Gastrocnemius medialis (tissue), 4 donors: ENCODE measurements at regions of chr19 and their contacts with region 1.

Region 1: DNA sequence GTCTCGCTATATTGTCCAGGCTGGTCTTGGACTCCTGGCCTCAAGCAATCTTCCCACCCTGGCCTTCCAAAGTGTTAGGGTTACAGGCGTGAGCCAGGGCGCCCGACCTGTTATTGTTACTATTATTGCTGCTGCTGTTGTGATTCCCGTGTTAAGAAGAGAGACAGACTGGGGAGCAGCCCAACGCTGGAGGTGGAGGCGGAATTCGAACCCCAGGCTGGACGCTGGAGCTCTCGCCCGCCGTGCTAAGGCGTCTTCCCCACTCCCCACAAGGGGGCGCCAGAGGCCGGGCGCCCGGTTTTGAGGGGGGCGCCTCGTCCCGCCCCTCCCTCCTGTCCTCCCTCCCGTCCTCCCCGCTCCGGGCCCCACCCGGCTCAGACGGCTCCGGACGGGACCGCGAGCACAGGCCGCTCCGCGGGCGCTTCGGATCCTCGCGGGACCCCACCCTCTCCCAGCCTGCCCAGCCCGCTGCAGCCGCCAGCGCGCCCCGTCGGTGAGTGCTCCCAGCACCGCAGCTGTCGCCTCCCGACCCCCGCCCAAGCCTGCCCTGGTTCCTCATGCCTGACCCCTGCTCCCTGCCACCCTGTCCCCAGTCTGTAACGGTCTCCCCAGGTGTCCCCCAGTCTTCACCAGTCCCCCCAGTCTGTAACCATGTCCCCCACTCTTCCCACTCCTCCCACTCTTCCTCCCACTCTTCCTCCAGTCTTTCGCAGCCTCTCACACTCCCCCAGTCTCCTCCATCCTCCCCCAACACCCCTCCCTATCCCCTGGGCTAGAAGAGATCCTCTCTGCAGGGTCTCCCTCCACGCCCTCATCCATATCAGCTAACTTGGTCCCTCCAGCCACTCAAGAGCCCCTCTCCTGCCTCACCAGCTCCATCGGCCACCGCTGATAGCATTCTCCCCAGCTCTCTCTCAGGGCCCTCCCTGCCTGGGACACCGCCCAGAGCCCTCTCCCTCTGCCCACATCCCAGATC is at the start of gene EHD2:
- DNase-seq: peak in 1 of 2 donors; percentile 38
- ATAC-seq: peak; percentile 46 to 71
- H3K4me3 ChIP-seq: peak within 1 kb of the TSS; percentile 57 to 65 (median 64)
- H3K27ac ChIP-seq: peak within 1 kb of the TSS; percentile 78 to 85 (median 82)
- H3K4me1 ChIP-seq: peaks cover 4 to 8% of the 10 kb centered on the region in 2 donors
- H3K27me3 ChIP-seq: peaks cover 10 to 34% (median 29%) of the 10 kb centered on the region in 3 donors
- CTCF ChIP-seq: peak; percentile 71 to 94 (median 92)
- POLR2A ChIP-seq: peak; percentile 50 to 72
- total RNA-seq, gene EHD2: 10.9 to 46.6 (median 33.8) TPM

Region 2: DNA sequence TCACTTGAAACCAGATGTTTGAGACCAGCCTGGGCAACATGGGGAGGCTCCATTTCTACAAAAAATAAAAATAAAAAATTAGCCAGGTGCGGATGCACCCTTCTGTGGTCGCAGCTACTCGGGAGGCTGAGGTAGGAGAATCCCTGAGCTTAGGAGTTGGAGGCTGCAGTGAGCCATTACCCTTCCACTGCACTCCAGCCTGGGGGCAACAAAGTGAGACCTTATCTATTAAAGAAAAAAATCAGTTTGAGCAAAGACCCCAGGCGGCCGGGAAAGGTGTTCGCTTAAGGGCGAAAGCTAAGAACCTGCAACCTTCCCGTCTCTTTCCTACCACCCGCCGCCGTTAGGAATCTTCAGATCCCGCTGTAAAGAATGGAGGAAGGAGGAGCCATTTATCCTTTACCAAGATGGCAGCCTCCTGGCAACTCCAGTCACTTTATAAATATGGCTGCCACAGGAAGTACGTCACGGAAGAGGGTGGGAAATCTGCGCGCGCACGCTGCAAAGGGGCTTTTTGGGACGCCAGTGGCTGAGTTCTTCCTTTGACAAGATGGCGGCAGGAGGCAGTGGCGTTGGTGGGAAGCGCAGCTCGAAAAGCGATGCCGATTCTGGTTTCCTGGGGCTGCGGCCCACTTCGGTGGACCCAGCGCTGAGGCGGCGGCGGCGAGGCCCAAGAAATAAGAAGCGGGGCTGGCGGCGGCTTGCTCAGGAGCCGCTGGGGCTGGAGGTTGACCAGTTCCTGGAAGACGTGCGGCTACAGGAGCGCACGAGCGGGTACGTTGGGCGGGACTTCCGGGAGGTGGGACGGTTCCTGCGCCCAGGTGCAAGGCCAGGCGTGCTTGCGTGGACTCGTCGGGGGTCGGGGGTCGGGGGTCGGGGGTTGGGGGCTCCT is 31.9 kb after region 1 on chr19 and contains the start of gene NOP53:
- in situ Hi-C with region 1: no loop called
- intact Hi-C with region 1: loop called (anchors 1 kb)
- DNase-seq: peak; percentile 95 to 97
- ATAC-seq: peak; percentile 94
- H3K4me3 ChIP-seq: peak within 1 kb of the TSS; percentile 77 to 99 (median 92)
- H3K27ac ChIP-seq: peak within 1 kb of the TSS; percentile 92 to 99 (median 98)
- H3K4me1 ChIP-seq: peaks cover 22 to 33% of the 10 kb centered on the region in 2 donors
- H3K27me3 ChIP-seq: no peaks in the 10 kb centered on the region
- CTCF ChIP-seq: peak in 1 of 5 experiments; percentile 21
- POLR2A ChIP-seq: peak; percentile 77 to 79
- total RNA-seq, gene NOP53: 141 to 262 (median 150) TPM

Region 3: GRCh38 chr19:47790398-47790814 is 77.1 kb after region 1 on chr19:
- in situ Hi-C with region 1: loop called in 2 of 4 experiments (anchors 5 kb)
- intact Hi-C with region 1: loop called (anchors 1 kb)
- DNase-seq: peak in 1 of 2 donors; percentile 54
- ATAC-seq: no peak
- H3K4me3 ChIP-seq: no peak overlapping the region
- H3K27ac ChIP-seq: no peak overlapping the region
- H3K4me1 ChIP-seq: peaks cover 13 to 16% of the 10 kb centered on the region in 2 donors
- H3K27me3 ChIP-seq: no peaks in the 10 kb centered on the region
- CTCF ChIP-seq: peak in 4 of 5 experiments; percentile 69 to 90 (median 77)
- POLR2A ChIP-seq: no peak

Region 4: GRCh38 chr19:47863514-47863936 is 150.2 kb after region 1 on chr19:
- in situ Hi-C with region 1: no loop called
- intact Hi-C with region 1: loop called (anchors 2 kb)
- DNase-seq: peak; percentile 17 to 32
- ATAC-seq: no peak
- H3K4me3 ChIP-seq: no peak overlapping the region
- H3K27ac ChIP-seq: no peak overlapping the region
- H3K4me1 ChIP-seq: no peaks in the 10 kb centered on the region
- H3K27me3 ChIP-seq: no peaks in the 10 kb centered on the region
- CTCF ChIP-seq: peak; percentile 23 to 83 (median 60)
- POLR2A ChIP-seq: no peak